Psoas muscle (tissue), 8 donors: ENCODE measurements at regions of chr10 and their contacts with region 1.

Region 1: GRCh38 chr10:51083356-51083853 is 9.1 kb downstream of the PRKG1 start:
- DNase-seq: no peak
- ATAC-seq: no peak
- H3K4me3 ChIP-seq: no peak overlapping the region
- H3K27ac ChIP-seq: no peak overlapping the region
- H3K4me1 ChIP-seq: peaks cover 5% of the 10 kb centered on the region
- H3K27me3 ChIP-seq: no peaks in the 10 kb centered on the region
- CTCF ChIP-seq: no peak

Region 2: DNA sequence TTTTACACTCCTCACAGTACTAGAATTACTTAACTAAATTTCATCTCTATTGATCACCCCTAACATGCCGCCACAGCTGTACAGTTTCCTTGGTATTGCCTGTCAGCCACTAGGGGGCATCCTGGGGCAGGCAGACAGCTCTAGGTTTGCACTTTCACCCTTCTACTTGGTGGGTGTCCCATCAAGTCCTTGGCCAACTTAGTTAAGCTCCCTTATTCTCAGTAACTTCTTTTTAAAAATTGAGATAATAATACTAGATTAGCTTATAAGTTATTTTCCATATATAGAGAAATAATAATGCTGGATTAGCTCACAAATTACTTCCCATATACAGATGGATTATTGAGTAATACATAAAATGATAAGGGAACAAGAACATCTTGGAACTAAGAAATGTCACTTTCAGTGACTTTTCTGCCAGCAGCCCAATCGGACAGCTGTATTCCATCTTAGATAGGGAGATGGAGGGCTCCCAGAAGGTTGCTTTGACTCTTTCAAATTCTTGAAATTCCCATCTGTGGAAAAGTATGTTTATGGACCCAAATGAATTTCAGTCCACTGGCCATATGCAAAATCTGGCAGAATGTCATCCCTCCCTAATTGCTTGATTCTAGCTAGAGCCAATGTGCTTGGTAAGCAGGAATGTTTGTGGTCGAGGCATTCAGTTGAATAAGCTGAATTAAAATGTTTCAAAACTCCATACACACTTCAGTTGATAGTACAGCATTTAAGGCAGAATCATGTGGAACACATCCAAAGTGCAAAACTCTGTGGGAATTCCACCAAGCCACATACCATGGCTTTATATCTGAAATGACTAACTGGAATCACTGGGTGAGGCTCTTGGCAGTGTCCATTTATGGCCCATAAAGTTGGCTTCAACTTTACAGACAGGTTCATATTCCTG is 306.3 kb after region 1 on chr10:
- intact Hi-C with region 1: loop called in 1 of 2 experiments (anchors 10 kb)
- DNase-seq: peak; percentile 18 to 57
- ATAC-seq: peak in 3 of 4 donors; percentile 54 to 81 (median 81)
- H3K4me3 ChIP-seq: no peak overlapping the region
- H3K27ac ChIP-seq: no peak overlapping the region
- H3K4me1 ChIP-seq: peaks cover 13% of the 10 kb centered on the region
- H3K27me3 ChIP-seq: no peaks in the 10 kb centered on the region
- CTCF ChIP-seq: peak; percentile 67